Vagina (tissue), 2 donors: ENCODE measurements at regions of chr11 and their contacts with region 1.

Region 1: DNA sequence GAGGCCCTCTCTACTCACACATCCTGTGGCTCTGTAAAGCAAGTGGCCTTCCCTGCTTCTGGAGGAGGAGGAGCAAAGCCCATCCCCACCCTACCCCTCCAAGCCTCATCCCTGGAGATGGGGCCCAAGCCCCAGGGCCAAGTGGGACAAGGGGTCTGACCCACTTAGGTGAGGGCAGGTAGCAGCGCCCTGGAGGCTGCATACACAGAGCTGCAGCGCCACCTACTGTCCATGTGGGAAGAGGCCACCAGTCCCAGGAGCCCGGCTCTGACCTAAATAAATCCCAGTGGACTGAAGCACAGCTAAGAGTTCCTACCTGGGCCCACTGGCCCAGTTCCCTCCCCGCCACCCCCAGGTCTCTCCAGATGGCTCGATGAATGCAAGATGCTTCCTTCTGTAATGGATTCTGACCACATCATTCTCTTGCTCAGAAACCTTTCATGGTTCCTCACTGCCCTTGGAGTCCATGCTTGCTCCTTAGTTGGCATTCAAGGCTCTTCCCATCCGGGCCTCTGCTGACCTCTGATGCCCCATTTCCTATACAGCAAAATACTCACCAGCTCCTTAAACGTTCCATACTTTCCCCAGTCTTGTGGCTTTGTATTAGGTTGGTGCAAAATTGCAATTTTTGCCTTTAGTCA is 62.1 kb downstream of the THAP12 start:
- DNase-seq: no peak
- H3K4me3 ChIP-seq: no peak overlapping the region
- H3K27ac ChIP-seq: no peak overlapping the region
- H3K4me1 ChIP-seq: peaks cover 7% of the 10 kb centered on the region
- H3K27me3 ChIP-seq: no peaks in the 10 kb centered on the region
- CTCF ChIP-seq: peak; percentile 76 to 90 (median 84)
- POLR2A ChIP-seq: no peak

Region 2: GRCh38 chr11:75907906-75908527 is 410.8 kb before region 1 on chr11:
- intact Hi-C with region 1: loop called (anchors 10 kb)
- DNase-seq: no peak
- H3K4me3 ChIP-seq: no peak overlapping the region
- H3K27ac ChIP-seq: no peak overlapping the region
- H3K4me1 ChIP-seq: peaks cover 6% of the 10 kb centered on the region
- H3K27me3 ChIP-seq: no peaks in the 10 kb centered on the region
- CTCF ChIP-seq: no peak
- POLR2A ChIP-seq: no peak

Region 3: DNA sequence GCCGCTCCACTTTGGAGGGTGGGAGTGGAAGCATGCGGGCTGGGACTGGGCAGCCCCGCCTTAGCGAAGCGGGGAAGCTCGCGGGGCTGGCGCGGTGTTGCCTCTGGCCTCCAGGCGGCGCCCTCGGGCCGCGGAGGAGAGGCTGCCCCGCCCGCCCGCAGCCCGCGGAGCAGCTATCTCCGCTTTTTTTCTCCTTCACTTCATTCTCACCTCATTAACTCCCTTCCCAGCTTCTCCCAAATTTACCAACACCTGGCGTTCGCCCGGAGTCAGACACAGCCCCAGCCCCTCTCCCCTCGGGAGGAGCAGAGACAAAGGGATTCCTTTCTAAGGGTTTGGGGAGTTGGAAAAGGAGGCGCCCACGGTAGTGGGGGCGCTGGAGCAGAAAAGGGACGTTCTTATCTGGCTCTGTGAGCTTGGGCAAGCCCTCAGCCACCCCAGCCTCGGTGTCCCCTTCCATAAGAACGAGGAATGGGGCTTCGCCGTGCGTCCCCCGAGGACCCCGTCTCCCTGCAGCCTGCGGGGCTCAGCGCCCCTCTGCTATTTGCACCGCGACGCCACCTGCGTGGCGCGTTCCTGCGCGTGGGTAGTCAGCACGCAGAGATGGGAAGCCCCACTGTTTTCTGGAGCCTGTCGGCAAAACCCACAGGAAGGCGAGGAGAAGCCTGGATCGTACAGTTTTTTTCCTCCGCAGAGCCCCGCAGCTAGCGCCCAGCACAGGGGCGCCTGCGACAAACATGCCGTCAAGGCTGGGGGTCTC is 111.0 kb before region 1 on chr11:
- intact Hi-C with region 1: loop called (anchors 1 kb)
- DNase-seq: no peak
- H3K4me3 ChIP-seq: peak overlapping the region; percentile 56 to 60
- H3K27ac ChIP-seq: no peak overlapping the region
- H3K4me1 ChIP-seq: peaks cover 51% of the 10 kb centered on the region
- H3K27me3 ChIP-seq: no peaks in the 10 kb centered on the region
- CTCF ChIP-seq: peak; percentile 91 to 94 (median 94)
- POLR2A ChIP-seq: no peak